ENCODE measurements at regions of chr3 and their contacts with region 1.

Region 1: GRCh38 chr3:123652346-123652984 is 67.6 kb upstream of the HACD2 start:
- H3K4me3 Mint-ChIP-seq: no peak overlapping the region
- H3K27ac Mint-ChIP-seq: no peak overlapping the region
- H3K4me1 Mint-ChIP-seq: peaks cover 28% of the 10 kb centered on the region
- H3K27me3 Mint-ChIP-seq: peaks cover 5% of the 10 kb centered on the region

Region 2: GRCh38 chr3:123702720-123703119 is 50.3 kb after region 1 on chr3:
- intact Hi-C with region 1: loop called (anchors 2 kb)
- H3K4me3 Mint-ChIP-seq: no peak overlapping the region
- H3K27ac Mint-ChIP-seq: no peak overlapping the region
- H3K4me1 Mint-ChIP-seq: peaks cover 3% of the 10 kb centered on the region
- H3K27me3 Mint-ChIP-seq: peaks cover 6% of the 10 kb centered on the region

Region 3: DNA sequence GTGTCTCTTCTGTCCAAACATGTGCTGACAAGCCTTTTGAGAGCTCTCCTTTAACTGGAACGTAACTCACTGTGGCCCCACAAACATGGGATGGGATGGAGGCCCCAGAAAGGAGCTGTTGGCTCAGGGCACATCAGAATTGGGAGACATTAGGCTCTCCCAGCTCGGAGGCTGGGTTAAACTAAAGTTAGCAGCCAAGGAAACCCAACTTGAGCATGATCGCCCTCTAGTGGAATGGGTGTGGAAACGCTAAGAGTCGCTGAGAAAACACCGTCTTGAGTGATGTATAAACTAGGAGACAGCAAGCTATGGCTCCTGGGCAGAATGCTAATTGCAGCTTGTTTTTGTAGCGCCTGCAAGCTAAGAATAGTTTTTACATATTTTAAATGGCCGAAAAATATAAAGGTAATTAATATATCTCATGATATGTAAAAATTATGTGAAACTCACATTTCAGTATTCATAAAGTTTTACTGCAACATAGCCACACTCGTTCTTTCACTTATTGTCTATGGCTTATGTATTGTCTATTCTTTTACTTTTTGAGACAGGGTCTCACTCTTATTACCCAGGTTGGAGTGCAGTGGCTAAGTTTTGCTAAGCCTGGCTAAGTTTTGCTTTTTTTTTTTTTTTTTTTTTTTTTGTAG is 71.2 kb after region 1 on chr3:
- intact Hi-C with region 1: loop called (anchors 1 kb)
- H3K4me3 Mint-ChIP-seq: no peak overlapping the region
- H3K27ac Mint-ChIP-seq: no peak overlapping the region
- H3K4me1 Mint-ChIP-seq: peaks cover 14% of the 10 kb centered on the region
- H3K27me3 Mint-ChIP-seq: peaks cover 21% of the 10 kb centered on the region

Region 4: DNA sequence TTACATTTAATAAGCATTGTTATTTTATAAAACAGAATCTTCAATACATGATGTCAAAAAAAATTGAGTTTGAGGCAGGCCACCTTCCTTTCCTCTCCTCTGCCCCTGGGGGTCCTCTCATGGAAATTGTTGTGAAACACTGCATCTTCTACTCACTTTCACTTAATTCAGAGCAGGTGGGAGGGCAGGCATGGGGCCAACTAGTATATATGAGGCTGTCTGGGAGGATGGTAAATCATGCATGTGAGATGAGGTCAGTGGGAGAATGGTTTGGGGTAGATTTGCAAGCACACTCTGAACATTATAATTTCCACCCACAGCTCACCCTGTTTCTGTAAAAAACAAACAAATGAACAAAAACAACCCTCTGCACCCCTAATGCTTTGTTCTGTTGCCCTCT is 318.9 kb after region 1 on chr3:
- intact Hi-C with region 1: no loop called
- H3K4me3 Mint-ChIP-seq: no peak overlapping the region
- H3K27ac Mint-ChIP-seq: no peak overlapping the region
- H3K4me1 Mint-ChIP-seq: no peaks in the 10 kb centered on the region
- H3K27me3 Mint-ChIP-seq: peaks cover 18% of the 10 kb centered on the region

Measured in dendritic cell treated with granulocyte-macrophage colony-stimulating factor and Interleukin-4, amounts not matched to agents 40 ng/mL and 50 ng/mL, for 4 days (primary cell).